Mammary epithelial cell (primary cell): ENCODE measurements at regions of chr4 and their contacts with region 1.

Region 1: DNA sequence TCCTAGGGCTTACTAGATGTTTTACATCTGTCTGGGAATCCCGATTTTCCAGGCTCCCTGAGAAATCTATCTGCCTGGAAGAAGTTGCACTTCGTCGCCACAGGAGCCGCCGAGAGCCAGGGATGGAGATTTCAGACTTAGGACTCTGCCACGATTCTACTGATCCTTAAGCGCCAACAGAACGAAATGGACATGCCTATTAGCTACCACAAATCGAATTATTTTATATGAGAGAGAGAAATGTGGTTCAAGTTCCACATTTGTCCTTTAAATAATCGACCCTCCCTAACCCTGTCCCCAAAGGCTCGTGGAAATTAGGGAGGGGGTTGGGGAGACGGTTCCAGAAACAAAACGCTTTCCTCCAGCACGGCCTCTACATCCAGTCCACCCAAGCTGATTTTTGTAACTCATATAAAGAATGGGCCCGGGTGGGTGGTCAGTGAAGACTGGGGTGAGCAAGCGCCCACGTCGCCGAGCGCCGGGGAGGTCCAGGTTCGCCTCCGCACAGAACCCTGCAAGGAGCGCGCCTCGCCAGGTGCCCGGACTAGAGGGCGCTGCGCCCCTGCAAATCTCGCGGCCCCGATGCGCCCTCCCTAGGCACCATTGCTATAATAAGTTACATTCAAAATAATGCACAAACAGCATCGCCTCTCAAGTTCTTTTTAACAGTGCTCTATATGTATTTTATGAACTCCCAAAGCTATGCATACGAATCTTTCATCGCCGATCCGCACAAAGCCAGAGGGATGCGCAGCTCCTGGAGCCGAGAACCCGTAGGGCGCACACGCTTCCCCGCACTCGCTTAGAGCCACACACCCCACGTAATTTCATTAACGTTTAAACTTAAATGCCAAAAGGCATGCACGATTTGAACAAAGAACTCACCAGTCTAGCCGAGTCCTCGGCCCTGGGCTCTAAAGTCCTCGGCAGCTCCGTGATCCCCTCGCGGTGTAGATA is 2.1 kb upstream of the FAT1 start:
- DNase-seq: peak; percentile 77
- H3K4me3 ChIP-seq: peak overlapping the region; percentile 92 to 100 (median 99)
- H3K27ac ChIP-seq: peak overlapping the region; percentile 99
- H3K4me1 ChIP-seq: peaks cover 30% of the 10 kb centered on the region
- H3K27me3 ChIP-seq: no peaks in the 10 kb centered on the region
- CTCF ChIP-seq: peak; percentile 52 to 90

Region 2: DNA sequence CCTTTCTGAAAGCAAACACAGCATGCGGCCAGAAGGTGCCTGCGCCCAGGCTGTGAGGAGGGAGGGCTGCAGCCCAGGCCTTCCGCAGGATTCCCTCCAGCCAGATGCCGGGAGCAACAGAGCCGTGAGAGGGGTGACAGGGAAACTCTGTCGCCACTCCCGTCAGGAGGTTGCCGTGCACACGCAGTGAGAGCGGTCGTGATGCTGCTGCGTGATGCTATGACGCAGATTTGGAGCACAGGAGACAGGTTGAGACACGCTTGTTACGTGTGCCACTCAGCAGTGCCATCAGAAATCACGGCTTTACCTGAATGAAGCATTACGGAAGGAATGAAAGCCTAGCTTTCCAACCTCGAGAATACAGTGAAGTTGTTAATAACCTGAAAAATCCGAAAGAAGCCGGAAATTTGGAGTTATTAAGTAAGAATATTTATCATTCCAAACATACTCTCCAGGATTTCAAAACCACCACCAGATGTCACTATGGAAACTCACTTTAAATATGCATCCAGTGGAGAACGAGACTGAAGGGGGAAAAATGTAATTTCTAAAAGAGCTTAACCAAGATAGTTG is 56.5 kb before region 1 on chr4:
- CTCF ChIA-PET with region 1: no interaction called
- dilution Hi-C with region 1: no loop called
- in situ Hi-C with region 1: no loop called
- intact Hi-C with region 1: loop called (anchors 1 kb)
- DNase-seq: peak; percentile 85
- H3K4me3 ChIP-seq: no peak overlapping the region
- H3K27ac ChIP-seq: peak overlapping the region; percentile 85
- H3K4me1 ChIP-seq: peaks cover 21% of the 10 kb centered on the region
- H3K27me3 ChIP-seq: no peaks in the 10 kb centered on the region
- CTCF ChIP-seq: peak; percentile 17 to 36

Region 3: GRCh38 chr4:186845137-186845842 is 119.5 kb after region 1 on chr4:
- CTCF ChIA-PET with region 1: no interaction called
- dilution Hi-C with region 1: no loop called
- in situ Hi-C with region 1: no loop called
- intact Hi-C with region 1: loop called (anchors 2 kb)
- DNase-seq: peak; percentile 80
- H3K4me3 ChIP-seq: no peak overlapping the region
- H3K27ac ChIP-seq: peak overlapping the region; percentile 63
- H3K4me1 ChIP-seq: peaks cover 23% of the 10 kb centered on the region
- H3K27me3 ChIP-seq: no peaks in the 10 kb centered on the region
- CTCF ChIP-seq: no peak

Region 4: DNA sequence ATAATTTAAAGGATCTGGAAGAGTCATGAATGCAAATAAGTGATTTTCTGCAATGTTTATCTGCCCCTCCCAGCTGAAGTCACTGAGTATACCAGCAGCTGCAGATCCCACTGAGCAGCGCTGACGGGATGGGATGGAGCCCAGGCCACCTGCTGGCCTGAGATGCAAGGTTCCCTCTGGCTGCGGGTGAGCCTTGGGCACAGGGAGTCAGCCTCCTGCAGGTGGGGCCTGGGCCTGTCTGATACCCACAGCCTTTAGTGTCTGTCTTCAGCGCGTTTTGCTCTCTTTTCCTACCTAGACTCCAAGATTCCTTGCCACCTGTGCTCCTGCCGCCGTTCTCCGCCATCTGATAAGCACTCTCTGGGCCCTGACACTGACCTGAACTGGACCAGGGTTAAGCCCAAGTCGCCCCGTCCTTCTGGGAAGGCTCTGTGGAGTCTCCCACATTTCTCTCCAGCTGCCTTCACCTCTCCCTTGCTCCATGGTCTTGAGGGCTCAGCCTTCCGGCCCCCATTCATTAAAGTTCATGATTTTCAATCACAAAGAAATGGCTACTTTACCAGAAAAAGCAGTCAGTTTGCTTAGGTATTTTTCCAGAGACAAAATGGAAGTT is 221.0 kb after region 1 on chr4:
- CTCF ChIA-PET with region 1: no interaction called
- dilution Hi-C with region 1: no loop called
- in situ Hi-C with region 1: loop called in 1 of 2 experiments (anchors 25 kb)
- intact Hi-C with region 1: no loop called
- DNase-seq: no peak
- H3K4me3 ChIP-seq: no peak overlapping the region
- H3K27ac ChIP-seq: no peak overlapping the region
- H3K4me1 ChIP-seq: no peaks in the 10 kb centered on the region
- H3K27me3 ChIP-seq: no peaks in the 10 kb centered on the region
- CTCF ChIP-seq: peak; percentile 22 to 33

Region 5: GRCh38 chr4:187128222-187128621 is 402.5 kb after region 1 on chr4:
- CTCF ChIA-PET with region 1: no interaction called
- dilution Hi-C with region 1: no loop called
- in situ Hi-C with region 1: loop called (anchors 5 to 10 kb)
- intact Hi-C with region 1: loop called (anchors 1 kb)
- DNase-seq: peak; percentile 95
- H3K4me3 ChIP-seq: peak overlapping the region; percentile 22 to 39 (median 31)
- H3K27ac ChIP-seq: peak overlapping the region; percentile 100
- H3K4me1 ChIP-seq: peaks cover 27% of the 10 kb centered on the region
- H3K27me3 ChIP-seq: no peaks in the 10 kb centered on the region
- CTCF ChIP-seq: no peak

Region 6: DNA sequence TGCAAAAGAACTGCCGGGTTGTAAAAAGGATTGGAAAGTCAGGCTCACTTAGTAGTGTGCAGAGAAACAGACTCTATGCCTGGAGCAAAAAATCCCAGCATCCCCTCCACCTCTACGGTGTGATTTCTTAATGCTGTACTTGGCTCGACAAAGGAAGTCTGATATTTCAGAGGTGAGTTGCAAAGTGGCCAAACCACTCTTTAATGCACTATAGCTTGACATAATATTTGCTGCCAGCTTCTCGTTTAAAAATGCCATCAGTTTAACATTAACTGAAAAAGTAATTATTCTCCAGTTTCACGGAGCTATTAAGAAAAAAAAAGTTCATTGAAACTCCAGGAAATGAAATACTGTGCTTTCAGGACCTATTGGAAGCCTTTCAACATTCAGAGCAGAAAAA is 821.6 kb after region 1 on chr4:
- CTCF ChIA-PET with region 1: no interaction called
- dilution Hi-C with region 1: no loop called
- in situ Hi-C with region 1: no loop called
- intact Hi-C with region 1: loop called (anchors 10 kb)
- DNase-seq: peak; percentile 39
- H3K4me3 ChIP-seq: no peak overlapping the region
- H3K27ac ChIP-seq: no peak overlapping the region
- H3K4me1 ChIP-seq: peaks cover 9% of the 10 kb centered on the region
- H3K27me3 ChIP-seq: no peaks in the 10 kb centered on the region
- CTCF ChIP-seq: no peak